ENCODE measurements at regions of chr12 and their contacts with region 1.

Region 1: GRCh38 chr12:89709157-89709994 is 738 bp upstream of the ATP2B1 start:
- DNase-seq: peak; percentile 100
- ATAC-seq: peak; percentile 72
- H3K4me3 ChIP-seq: peak overlapping the region; percentile 84 to 99 (median 97)
- H3K4me3 Mint-ChIP-seq: peak overlapping the region; percentile 93
- H3K27ac ChIP-seq: peak overlapping the region; percentile 95 to 99
- H3K27ac Mint-ChIP-seq: peak overlapping the region; percentile 98
- H3K4me1 ChIP-seq: peaks cover 15 to 31% of the 10 kb centered on the region in 2 donors
- H3K4me1 Mint-ChIP-seq: peaks cover 33% of the 10 kb centered on the region
- H3K27me3 ChIP-seq: no peaks in the 10 kb centered on the region
- H3K27me3 Mint-ChIP-seq: no peaks in the 10 kb centered on the region
- CTCF ChIP-seq: no peak

Region 2: GRCh38 chr12:89524541-89525285 is 184.7 kb before region 1 on chr12 and contains the start of gene GALNT4:
- CTCF ChIA-PET with region 1: no interaction called
- POLR2A ChIA-PET with region 1: no interaction called
- intact Hi-C with region 1: loop called (anchors 2 kb)
- DNase-seq: peak; percentile 91
- ATAC-seq: peak; percentile 76
- H3K4me3 ChIP-seq: peak within 1 kb of the TSS; percentile 72 to 98 (median 85)
- H3K4me3 Mint-ChIP-seq: peak within 1 kb of the TSS; percentile 96
- H3K27ac ChIP-seq: peak within 1 kb of the TSS; percentile 90 to 91
- H3K27ac Mint-ChIP-seq: peak within 1 kb of the TSS; percentile 93
- H3K4me1 ChIP-seq: peaks cover 32 to 40% of the 10 kb centered on the region in 2 donors
- H3K4me1 Mint-ChIP-seq: peaks cover 62% of the 10 kb centered on the region
- H3K27me3 ChIP-seq: no peaks in the 10 kb centered on the region
- H3K27me3 Mint-ChIP-seq: no peaks in the 10 kb centered on the region
- CTCF ChIP-seq: peak; percentile 73
- total RNA-seq, gene GALNT4: 8.3 and 10.3 TPM in 2 replicates

Region 3: DNA sequence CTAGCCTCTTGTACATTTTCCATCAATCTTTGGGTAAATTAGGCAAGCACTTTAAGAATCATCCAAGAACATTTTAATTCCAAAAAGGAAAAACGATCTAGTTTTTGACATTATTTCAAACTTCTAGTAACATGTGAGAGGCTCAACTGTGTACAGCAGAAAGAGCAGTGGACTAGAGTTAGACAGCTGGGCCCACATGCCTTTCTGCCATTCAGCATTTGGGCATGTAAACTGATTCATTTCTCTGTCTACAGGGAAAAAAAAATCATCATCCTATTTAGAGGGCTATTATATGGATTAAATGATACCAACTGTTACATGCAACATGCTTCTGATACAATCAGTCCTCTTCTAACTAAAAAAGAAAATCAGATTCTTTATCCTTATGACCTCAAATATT is 18.5 kb before region 1 on chr12:
- CTCF ChIA-PET with region 1: no interaction called
- POLR2A ChIA-PET with region 1: no interaction called
- intact Hi-C with region 1: no loop called
- DNase-seq: no peak
- ATAC-seq: no peak
- H3K4me3 ChIP-seq: no peak overlapping the region
- H3K4me3 Mint-ChIP-seq: no peak overlapping the region
- H3K27ac ChIP-seq: no peak overlapping the region
- H3K27ac Mint-ChIP-seq: no peak overlapping the region
- H3K4me1 ChIP-seq: peaks cover 22 to 61% of the 10 kb centered on the region in 2 donors
- H3K4me1 Mint-ChIP-seq: peaks cover 75% of the 10 kb centered on the region
- H3K27me3 ChIP-seq: no peaks in the 10 kb centered on the region
- H3K27me3 Mint-ChIP-seq: no peaks in the 10 kb centered on the region
- CTCF ChIP-seq: no peak

Region 4: DNA sequence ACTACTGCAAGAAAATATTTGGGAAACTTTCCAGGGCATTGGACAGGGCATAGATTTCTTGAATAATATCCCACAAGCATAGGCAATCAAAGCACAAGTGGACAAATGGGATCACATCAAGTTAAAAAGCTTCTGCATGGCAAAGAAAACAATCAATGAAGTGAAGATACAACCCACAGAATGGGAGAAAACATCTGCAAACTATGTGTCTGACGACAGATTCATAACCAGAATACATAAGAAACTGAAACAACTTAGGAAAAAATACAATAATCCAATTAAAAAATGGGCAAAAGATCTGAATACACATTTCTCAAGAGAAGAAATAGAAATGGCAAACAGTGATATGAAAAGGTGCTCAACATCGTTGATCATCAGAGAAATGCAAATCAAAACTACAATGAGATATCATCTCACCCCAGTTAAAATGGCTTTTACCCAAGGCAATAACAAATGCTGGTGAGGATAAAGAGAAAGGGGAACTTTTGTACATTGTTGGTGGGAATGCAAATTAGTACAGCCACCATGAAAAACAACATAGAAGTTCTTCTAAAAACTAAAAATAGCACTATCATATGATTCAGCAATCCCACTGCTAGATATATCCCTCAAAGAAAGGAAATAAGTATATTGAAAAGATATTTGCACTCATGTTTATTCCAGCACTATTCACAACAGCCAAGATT is 33.1 kb after region 1 on chr12:
- CTCF ChIA-PET with region 1: no interaction called
- POLR2A ChIA-PET with region 1: interaction called, 5 read pairs
- intact Hi-C with region 1: loop called (anchors 1 kb)
- DNase-seq: peak; percentile 65
- ATAC-seq: peak; percentile 92
- H3K4me3 ChIP-seq: peak overlapping the region in 2 of 5 experiments; percentile 21 to 48
- H3K4me3 Mint-ChIP-seq: peak overlapping the region; percentile 70
- H3K27ac ChIP-seq: peak overlapping the region; percentile 18 to 72
- H3K27ac Mint-ChIP-seq: peak overlapping the region; percentile 91
- H3K4me1 ChIP-seq: peaks cover 12 to 14% of the 10 kb centered on the region in 2 donors
- H3K4me1 Mint-ChIP-seq: peaks cover 20% of the 10 kb centered on the region
- H3K27me3 ChIP-seq: no peaks in the 10 kb centered on the region
- H3K27me3 Mint-ChIP-seq: no peaks in the 10 kb centered on the region
- CTCF ChIP-seq: no peak

Region 5: DNA sequence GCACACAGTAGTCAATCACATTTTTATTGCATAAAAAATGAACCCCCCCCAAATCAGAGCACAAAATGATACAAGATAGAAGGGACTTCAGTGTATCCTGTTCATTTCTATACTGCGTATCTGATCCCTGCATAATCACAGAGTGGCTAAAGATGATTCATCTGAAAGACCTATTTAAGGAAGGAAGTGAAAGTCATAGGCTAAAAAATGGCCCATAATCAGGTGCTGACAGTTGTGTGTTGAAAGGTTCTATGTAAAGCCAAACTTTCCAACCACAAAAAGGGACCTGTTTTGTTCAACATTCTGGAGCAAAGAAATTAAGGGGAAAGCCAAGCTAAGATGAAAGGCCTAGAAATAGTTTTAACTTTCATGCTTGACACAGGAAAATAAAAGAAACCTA is 147.1 kb after region 1 on chr12:
- CTCF ChIA-PET with region 1: interaction called, 7 read pairs
- POLR2A ChIA-PET with region 1: interaction called, 10 read pairs
- intact Hi-C with region 1: no loop called
- DNase-seq: peak; percentile 71
- ATAC-seq: peak; percentile 88
- H3K4me3 ChIP-seq: peak overlapping the region in 1 of 5 experiments; percentile 21
- H3K4me3 Mint-ChIP-seq: peak overlapping the region; percentile 64
- H3K27ac ChIP-seq: no peak overlapping the region
- H3K27ac Mint-ChIP-seq: peak overlapping the region; percentile 76
- H3K4me1 ChIP-seq: peaks cover 45 to 46% of the 10 kb centered on the region in 2 donors
- H3K4me1 Mint-ChIP-seq: peaks cover 50% of the 10 kb centered on the region
- H3K27me3 ChIP-seq: no peaks in the 10 kb centered on the region
- H3K27me3 Mint-ChIP-seq: no peaks in the 10 kb centered on the region
- CTCF ChIP-seq: no peak

Region 6: DNA sequence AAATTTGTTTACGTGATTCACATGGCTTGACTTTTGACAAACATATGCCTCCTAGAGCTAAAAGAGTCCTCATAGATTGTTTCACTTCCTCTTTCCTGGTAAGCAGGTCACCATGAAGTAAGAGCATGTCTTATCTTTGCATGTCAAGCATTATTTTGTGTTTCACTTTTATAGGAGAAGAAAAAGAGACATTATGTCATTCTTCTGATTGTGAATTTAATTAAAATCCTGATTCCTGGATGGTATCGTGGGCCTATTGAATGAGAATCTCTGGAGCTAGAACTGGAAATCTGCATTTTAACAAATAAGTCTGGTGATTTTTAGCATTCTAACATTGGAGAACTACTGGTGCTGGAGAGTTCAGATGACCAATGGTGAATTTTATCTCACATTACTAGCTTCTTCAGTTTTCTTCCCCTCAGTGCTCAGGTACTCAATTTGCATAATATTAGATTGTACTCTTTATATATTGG is 217.9 kb after region 1 on chr12:
- CTCF ChIA-PET with region 1: interaction called, 9 read pairs
- POLR2A ChIA-PET with region 1: interaction called, 67 read pairs
- intact Hi-C with region 1: loop called (anchors 1 kb)
- DNase-seq: peak; percentile 89
- ATAC-seq: peak; percentile 88
- H3K4me3 ChIP-seq: peak overlapping the region; percentile 46 to 83 (median 60)
- H3K4me3 Mint-ChIP-seq: peak overlapping the region; percentile 95
- H3K27ac ChIP-seq: peak overlapping the region; percentile 96 to 97
- H3K27ac Mint-ChIP-seq: peak overlapping the region; percentile 99
- H3K4me1 ChIP-seq: peaks cover 24 to 32% of the 10 kb centered on the region in 2 donors
- H3K4me1 Mint-ChIP-seq: peaks cover 52% of the 10 kb centered on the region
- H3K27me3 ChIP-seq: no peaks in the 10 kb centered on the region
- H3K27me3 Mint-ChIP-seq: no peaks in the 10 kb centered on the region
- CTCF ChIP-seq: no peak

Region 7: DNA sequence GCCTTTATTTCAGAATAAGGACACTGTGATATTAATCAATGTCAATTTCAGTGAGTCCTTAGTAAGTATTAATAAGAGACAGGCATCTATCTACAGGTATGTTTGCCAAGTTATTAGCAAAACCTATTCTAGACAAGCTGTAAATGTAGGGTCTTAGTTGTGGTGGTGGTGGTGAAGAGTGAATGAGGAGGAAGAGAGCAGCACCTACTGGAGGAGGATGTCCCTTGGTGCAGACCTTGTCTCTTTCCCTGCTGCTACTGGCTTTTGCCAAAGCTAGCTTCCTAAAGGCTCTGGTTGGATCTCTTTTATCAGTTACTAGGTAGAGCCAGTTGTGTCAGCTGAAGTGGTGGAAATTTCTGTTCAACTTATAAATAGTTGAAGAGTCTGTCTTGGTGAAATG is 304.0 kb after region 1 on chr12:
- CTCF ChIA-PET with region 1: interaction called, 22 read pairs
- POLR2A ChIA-PET with region 1: interaction called, 6 read pairs
- intact Hi-C with region 1: loop called (anchors 1 kb)
- DNase-seq: peak; percentile 64
- ATAC-seq: peak; percentile 95
- H3K4me3 ChIP-seq: no peak overlapping the region
- H3K4me3 Mint-ChIP-seq: no peak overlapping the region
- H3K27ac ChIP-seq: no peak overlapping the region
- H3K27ac Mint-ChIP-seq: peak overlapping the region; percentile 33
- H3K4me1 ChIP-seq: no peaks in the 10 kb centered on the region
- H3K4me1 Mint-ChIP-seq: peaks cover 14% of the 10 kb centered on the region
- H3K27me3 ChIP-seq: no peaks in the 10 kb centered on the region
- H3K27me3 Mint-ChIP-seq: no peaks in the 10 kb centered on the region
- CTCF ChIP-seq: peak; percentile 60

Measured in B cell (primary cell).